Calu3 (cell line): ENCODE measurements at regions of chr20 and their contacts with region 1.

Region 1: DNA sequence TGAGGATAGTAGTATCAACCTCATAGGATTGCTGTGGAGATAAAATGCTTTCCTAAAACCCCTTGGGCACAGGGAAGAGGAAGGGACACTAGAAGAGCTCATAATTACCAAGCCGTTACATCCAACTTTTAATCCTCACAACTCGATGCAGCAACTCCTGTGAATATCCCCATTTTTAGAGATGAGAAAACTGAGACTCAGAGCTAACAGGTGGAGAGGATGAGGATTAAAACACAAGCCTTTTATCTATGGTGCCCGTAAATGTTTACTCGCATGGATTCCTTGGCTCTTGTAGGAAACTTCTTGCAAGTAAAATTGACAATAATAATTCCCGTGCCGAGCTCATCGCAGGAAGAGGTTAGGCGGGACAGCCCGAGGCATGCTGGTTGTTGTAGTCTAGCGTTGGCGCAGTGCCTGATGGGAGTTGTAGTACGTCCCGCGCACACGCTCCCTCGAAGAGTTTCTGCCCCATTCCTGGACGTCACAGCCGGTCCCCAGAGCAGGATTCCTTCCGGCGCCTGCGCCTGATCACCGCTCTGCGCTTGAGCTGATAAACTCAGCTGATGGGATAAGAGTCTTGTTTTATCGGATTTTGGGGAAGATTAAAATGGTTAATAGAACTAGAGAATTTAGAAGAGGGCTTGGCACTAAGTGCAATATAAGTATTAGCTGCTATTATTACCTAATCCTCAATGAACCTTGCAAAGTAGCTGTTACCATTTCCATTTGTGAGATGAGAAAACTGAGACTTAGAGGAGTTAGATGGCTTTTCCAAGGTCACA is 2.8 kb upstream of the UBE2V1 start:
- DNase-seq: peak; percentile 97
- H3K4me3 Mint-ChIP-seq: peak overlapping the region; percentile 73
- H3K27ac Mint-ChIP-seq: peak overlapping the region; percentile 69
- H3K4me1 Mint-ChIP-seq: peaks cover 53% of the 10 kb centered on the region
- H3K27me3 Mint-ChIP-seq: no peaks in the 10 kb centered on the region
- CTCF ChIP-seq: no peak

Region 2: DNA sequence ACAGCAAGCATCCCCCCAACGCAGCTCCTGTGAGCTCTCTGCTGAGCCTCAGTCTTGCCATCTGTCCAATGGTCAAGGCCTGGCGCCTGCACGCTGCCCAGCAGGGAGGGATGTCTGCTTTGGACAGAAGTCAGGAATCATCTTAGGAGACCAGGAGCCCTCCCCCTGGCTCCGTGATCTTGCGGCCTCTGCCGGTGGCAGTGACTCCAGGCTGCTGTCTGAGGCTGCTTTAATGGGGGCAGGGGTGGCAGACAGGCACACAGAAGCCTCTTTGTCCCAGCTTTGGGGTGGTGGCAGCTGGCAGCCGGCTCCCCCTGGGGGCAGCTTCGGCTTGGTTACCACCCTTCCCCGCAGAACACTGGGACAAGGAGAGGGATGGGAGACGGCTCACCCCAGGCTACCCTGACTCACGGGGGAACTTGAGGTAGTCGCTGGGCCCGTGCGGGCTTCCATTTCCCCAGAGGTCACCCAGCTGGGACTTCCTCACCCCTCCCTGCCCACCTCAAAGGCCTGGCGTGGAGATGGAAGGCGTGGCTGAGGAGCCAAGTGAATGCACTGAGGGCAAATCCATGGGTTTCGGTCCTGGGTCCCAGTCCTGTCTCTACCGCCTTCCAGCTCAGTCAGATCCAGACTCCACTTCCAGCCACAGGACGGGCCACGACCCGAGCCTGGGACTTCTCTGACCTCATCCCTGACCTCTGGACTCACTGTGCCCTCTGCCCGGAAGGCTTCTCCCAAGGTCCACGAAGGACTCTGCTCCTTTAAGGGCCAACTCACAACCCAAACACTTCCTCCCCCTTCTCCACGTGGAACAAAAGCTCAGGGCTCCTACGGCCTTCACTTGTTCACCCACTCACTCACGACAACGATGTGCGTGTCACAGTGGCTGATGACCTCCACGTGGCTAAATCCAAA is 23.0 kb after region 1 on chr20:
- CTCF ChIA-PET with region 1: interaction called, 24 read pairs
- intact Hi-C with region 1: no loop called
- DNase-seq: peak; percentile 96
- H3K4me3 Mint-ChIP-seq: peak overlapping the region; percentile 36
- H3K27ac Mint-ChIP-seq: peak overlapping the region; percentile 61
- H3K4me1 Mint-ChIP-seq: peaks cover 54% of the 10 kb centered on the region
- H3K27me3 Mint-ChIP-seq: no peaks in the 10 kb centered on the region
- CTCF ChIP-seq: peak; percentile 69

Region 3: GRCh38 chr20:50172347-50173013 is 56.7 kb after region 1 on chr20:
- CTCF ChIA-PET with region 1: interaction called, 75 read pairs
- intact Hi-C with region 1: no loop called
- DNase-seq: peak; percentile 90
- H3K4me3 Mint-ChIP-seq: peak overlapping the region; percentile 58
- H3K27ac Mint-ChIP-seq: peak overlapping the region; percentile 28
- H3K4me1 Mint-ChIP-seq: peaks cover 18% of the 10 kb centered on the region
- H3K27me3 Mint-ChIP-seq: no peaks in the 10 kb centered on the region
- CTCF ChIP-seq: no peak

Region 4: DNA sequence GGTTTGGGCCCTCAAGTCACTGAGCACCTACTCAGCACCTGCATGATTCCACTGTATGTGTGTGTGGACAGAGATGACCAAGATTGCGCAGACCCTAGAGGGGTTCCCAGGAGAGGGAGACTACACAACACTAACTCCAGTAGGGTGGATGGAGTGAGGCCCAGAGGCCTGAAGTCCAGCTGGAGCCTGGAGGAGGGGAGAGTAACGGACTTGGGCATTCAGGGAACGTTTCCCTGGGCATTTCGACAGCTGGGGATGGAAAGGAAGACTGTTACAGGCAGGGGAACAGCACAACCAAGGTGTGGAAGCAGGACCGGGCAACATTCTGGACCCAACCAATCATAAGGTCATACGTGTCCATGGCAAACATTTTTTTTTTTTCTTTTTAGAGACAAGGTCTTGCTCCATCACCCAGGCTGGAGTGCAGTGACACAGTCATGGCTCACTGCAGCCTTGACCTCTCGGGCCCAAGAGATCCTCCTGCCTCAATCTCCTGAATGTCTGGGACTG is 63.8 kb after region 1 on chr20:
- CTCF ChIA-PET with region 1: interaction called, 48 read pairs
- intact Hi-C with region 1: loop called (anchors 2 kb)
- DNase-seq: no peak
- H3K4me3 Mint-ChIP-seq: no peak overlapping the region
- H3K27ac Mint-ChIP-seq: peak overlapping the region; percentile 22
- H3K4me1 Mint-ChIP-seq: peaks cover 9% of the 10 kb centered on the region
- H3K27me3 Mint-ChIP-seq: no peaks in the 10 kb centered on the region
- CTCF ChIP-seq: peak; percentile 62